Activated B cell treated with CpG ODN at 0.5 μM for 24 hours (primary cell): ENCODE measurements at regions of chr7 and their contacts with region 1.

Region 1: DNA sequence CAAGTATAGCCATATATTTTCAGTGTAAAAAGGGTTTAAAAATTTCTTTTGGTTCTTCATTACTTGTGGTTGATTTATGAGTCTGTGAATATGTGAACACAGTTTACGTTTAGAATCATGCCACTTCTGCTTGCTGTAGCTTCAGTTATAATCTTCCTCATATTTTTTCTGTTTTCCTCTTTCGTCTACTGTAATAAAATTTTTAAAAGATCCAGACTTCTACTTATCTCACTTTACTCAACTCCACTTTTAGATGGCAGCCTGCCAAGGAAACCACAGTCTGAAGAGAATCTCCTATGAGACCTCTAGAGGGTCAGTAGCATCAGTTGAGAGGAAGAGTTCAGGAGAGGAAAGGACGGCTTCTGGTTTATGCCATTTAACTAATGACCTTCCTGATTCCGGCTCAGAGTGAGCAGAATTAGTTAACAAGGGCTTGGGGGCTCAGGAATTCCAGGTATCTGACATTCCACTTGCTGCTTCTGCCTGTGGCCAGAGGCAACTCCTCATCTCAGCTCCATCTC is 21.4 kb downstream of the CREB5 start:
- DNase-seq: no peak
- ATAC-seq: no peak
- H3K4me3 Mint-ChIP-seq: no peak overlapping the region
- H3K27ac Mint-ChIP-seq: no peak overlapping the region
- H3K4me1 Mint-ChIP-seq: no peaks in the 10 kb centered on the region
- H3K27me3 Mint-ChIP-seq: peaks cover 27% of the 10 kb centered on the region
- CTCF ChIP-seq: no peak

Region 2: GRCh38 chr7:28378574-28379149 is 55.1 kb before region 1 on chr7:
- CTCF ChIA-PET with region 1: no interaction called
- POLR2A ChIA-PET with region 1: no interaction called
- intact Hi-C with region 1: loop called (anchors 10 kb)
- DNase-seq: no peak
- ATAC-seq: no peak
- H3K4me3 Mint-ChIP-seq: no peak overlapping the region
- H3K27ac Mint-ChIP-seq: no peak overlapping the region
- H3K4me1 Mint-ChIP-seq: no peaks in the 10 kb centered on the region
- H3K27me3 Mint-ChIP-seq: peaks cover 9% of the 10 kb centered on the region
- CTCF ChIP-seq: no peak